CD8-positive, alpha-beta T cell (primary cell): ENCODE measurements at regions of chr13 and their contacts with region 1.

Region 1: DNA sequence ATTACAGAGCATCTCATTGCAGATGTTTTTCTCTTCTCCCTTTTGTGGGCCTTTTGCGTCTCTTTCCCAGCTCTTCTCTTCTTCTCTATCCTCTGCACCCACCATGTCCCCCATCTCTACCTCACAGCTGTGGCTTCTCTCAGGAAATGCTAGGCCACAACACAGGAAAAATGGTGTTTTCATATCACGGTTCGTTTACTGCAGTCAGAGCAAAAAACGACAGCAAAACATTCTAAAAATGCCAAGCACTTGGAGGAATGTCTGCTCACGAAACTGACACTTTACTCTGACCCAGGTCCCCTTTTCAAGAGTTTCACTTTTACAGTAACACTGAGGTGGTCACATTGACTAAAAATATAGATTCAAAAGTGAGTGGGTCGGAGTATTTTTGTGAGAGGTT is 152.2 kb downstream of the DCT start:
- DNase-seq: peak in 4 of 9 experiments; percentile 40 to 64 (median 54)
- ATAC-seq: peak; percentile 29
- H3K4me3 ChIP-seq: peak overlapping the region; percentile 1 to 3
- H3K4me3 Mint-ChIP-seq: peak overlapping the region; percentile 71
- H3K27ac ChIP-seq: peak overlapping the region in 1 of 2 experiments; percentile 63
- H3K27ac Mint-ChIP-seq: peak overlapping the region; percentile 82
- H3K4me1 ChIP-seq: peaks cover 77% of the 10 kb centered on the region
- H3K4me1 Mint-ChIP-seq: peaks cover 83% of the 10 kb centered on the region
- H3K27me3 ChIP-seq: no peaks in the 10 kb centered on the region
- H3K27me3 Mint-ChIP-seq: peaks cover 8% of the 10 kb centered on the region
- CTCF ChIP-seq: no peak

Region 2: GRCh38 chr13:94239135-94239534 is 88.2 kb before region 1 on chr13:
- CTCF ChIA-PET with region 1: interaction called, 5 read pairs
- POLR2A ChIA-PET with region 1: no interaction called
- intact Hi-C with region 1: loop called in 1 of 2 experiments (anchors 5 kb)
- DNase-seq: peak in 2 of 9 experiments; percentile 29 to 52
- ATAC-seq: peak; percentile 89
- H3K4me3 ChIP-seq: no peak overlapping the region
- H3K4me3 Mint-ChIP-seq: no peak overlapping the region
- H3K27ac ChIP-seq: no peak overlapping the region
- H3K27ac Mint-ChIP-seq: no peak overlapping the region
- H3K4me1 ChIP-seq: peaks cover 32% of the 10 kb centered on the region
- H3K4me1 Mint-ChIP-seq: peaks cover 40% of the 10 kb centered on the region
- H3K27me3 ChIP-seq: no peaks in the 10 kb centered on the region
- H3K27me3 Mint-ChIP-seq: no peaks in the 10 kb centered on the region
- CTCF ChIP-seq: no peak

Region 3: DNA sequence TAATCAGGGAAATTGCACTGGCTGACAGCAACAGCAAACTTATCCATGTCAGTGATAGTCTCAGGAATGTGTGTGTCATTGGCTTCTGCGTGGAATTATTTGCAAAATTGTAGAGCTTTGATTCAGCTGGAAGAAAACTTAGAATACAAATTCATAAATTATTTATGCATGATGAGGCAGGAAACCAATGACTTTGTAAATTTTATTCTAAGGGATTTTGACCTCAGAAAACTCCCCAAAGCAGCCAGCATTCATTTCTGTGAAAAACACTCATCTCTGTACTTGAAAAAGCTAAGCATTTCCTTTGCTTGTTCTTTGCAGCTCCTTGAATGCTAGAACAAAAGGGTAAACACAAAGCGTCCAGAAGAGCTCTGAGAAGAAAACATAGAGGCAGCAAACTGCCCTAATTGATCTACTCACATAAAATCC is 10.2 kb before region 1 on chr13:
- CTCF ChIA-PET with region 1: interaction called, 5 read pairs
- POLR2A ChIA-PET with region 1: interaction called, 6 read pairs
- intact Hi-C with region 1: loop called in 1 of 2 experiments (anchors 2 kb)
- DNase-seq: no peak
- ATAC-seq: no peak
- H3K4me3 ChIP-seq: no peak overlapping the region
- H3K4me3 Mint-ChIP-seq: no peak overlapping the region
- H3K27ac ChIP-seq: no peak overlapping the region
- H3K27ac Mint-ChIP-seq: no peak overlapping the region
- H3K4me1 ChIP-seq: no peaks in the 10 kb centered on the region
- H3K4me1 Mint-ChIP-seq: peaks cover 23% of the 10 kb centered on the region
- H3K27me3 ChIP-seq: no peaks in the 10 kb centered on the region
- H3K27me3 Mint-ChIP-seq: no peaks in the 10 kb centered on the region
- CTCF ChIP-seq: no peak

Region 4: GRCh38 chr13:94345374-94346195 is 18.3 kb after region 1 on chr13:
- CTCF ChIA-PET with region 1: interaction called, 8 read pairs
- POLR2A ChIA-PET with region 1: interaction called, 3 read pairs
- intact Hi-C with region 1: loop called in 1 of 2 experiments (anchors 2 kb)
- DNase-seq: peak in 2 of 9 experiments; percentile 55 to 68
- ATAC-seq: peak; percentile 56
- H3K4me3 ChIP-seq: no peak overlapping the region
- H3K4me3 Mint-ChIP-seq: no peak overlapping the region
- H3K27ac ChIP-seq: no peak overlapping the region
- H3K27ac Mint-ChIP-seq: no peak overlapping the region
- H3K4me1 ChIP-seq: no peaks in the 10 kb centered on the region
- H3K4me1 Mint-ChIP-seq: peaks cover 10% of the 10 kb centered on the region
- H3K27me3 ChIP-seq: no peaks in the 10 kb centered on the region
- H3K27me3 Mint-ChIP-seq: peaks cover 2% of the 10 kb centered on the region
- CTCF ChIP-seq: peak; percentile 34

Region 5: GRCh38 chr13:94595950-94596574 is 268.7 kb after region 1 on chr13 and contains the start of gene TGDS:
- CTCF ChIA-PET with region 1: no interaction called
- POLR2A ChIA-PET with region 1: no interaction called
- intact Hi-C with region 1: loop called (anchors 5 to 10 kb)
- DNase-seq: peak; percentile 74 to 96 (median 87)
- ATAC-seq: peak; percentile 97
- H3K4me3 ChIP-seq: peak within 1 kb of the TSS; percentile 94 to 97
- H3K4me3 Mint-ChIP-seq: peak within 1 kb of the TSS; percentile 88
- H3K27ac ChIP-seq: peak within 1 kb of the TSS; percentile 77 to 83
- H3K27ac Mint-ChIP-seq: peak within 1 kb of the TSS; percentile 94
- H3K4me1 ChIP-seq: peaks cover 24% of the 10 kb centered on the region
- H3K4me1 Mint-ChIP-seq: peaks cover 42% of the 10 kb centered on the region
- H3K27me3 ChIP-seq: no peaks in the 10 kb centered on the region
- H3K27me3 Mint-ChIP-seq: no peaks in the 10 kb centered on the region
- CTCF ChIP-seq: no peak
- total RNA-seq, gene TGDS: 4.5 to 4.6 TPM

Region 6: DNA sequence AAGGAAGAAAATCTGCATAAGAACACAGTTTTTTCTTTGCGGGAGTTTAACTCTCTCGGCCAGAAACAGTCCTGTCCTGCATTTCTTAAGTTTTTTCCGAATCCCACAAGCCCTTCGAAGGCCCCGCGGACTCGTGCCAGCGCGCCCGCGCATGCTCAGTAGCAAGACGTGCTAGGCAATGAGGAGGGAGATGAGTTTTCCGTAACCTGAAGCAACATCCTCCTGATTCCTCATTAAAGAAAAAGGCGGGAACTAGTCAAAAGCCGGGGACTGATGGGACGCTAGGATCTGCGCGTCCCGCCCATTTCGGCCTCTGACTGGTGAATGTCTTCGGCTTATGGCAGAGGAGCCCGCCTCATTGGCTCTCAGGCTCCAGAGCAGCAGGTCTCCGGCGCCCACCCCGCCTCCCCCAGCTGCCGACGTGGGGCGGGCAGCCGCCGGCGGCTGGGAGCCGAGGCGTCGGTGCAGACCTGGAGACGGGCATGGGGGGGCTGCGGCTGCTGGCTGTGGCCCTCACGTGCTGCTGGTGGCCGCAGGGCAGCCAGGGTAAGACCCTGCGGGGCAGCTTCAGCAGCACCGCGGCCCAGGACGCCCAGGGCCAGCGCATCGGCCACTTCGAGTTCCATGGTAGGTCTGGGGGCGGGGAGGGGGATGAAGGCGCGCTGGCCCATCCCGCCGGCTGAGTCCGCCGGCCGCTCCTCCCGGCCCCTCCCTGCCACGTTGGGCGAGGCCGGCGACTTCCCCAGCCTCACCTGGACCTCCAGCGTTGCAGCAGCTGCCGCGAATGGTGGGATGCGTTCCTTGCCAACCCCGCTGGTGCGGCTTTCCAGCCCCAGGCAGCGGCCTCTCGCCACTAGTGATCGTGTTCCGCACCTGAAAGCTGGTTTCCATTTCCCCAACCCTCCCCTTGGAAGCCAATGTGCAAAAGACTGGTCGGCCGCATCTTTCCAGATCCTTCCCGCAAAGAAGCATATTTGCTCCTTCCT is 274.4 kb after region 1 on chr13 and contains the start of gene GPR180:
- CTCF ChIA-PET with region 1: no interaction called
- POLR2A ChIA-PET with region 1: no interaction called
- intact Hi-C with region 1: loop called (anchors 5 to 10 kb)
- DNase-seq: peak; percentile 66 to 97 (median 87)
- ATAC-seq: peak; percentile 98
- H3K4me3 ChIP-seq: peak within 1 kb of the TSS; percentile 62 to 76
- H3K4me3 Mint-ChIP-seq: peak within 1 kb of the TSS; percentile 84
- H3K27ac ChIP-seq: peak within 1 kb of the TSS; percentile 43 to 51
- H3K27ac Mint-ChIP-seq: peak within 1 kb of the TSS; percentile 86
- H3K4me1 ChIP-seq: peaks cover 3% of the 10 kb centered on the region
- H3K4me1 Mint-ChIP-seq: peaks cover 42% of the 10 kb centered on the region
- H3K27me3 ChIP-seq: no peaks in the 10 kb centered on the region
- H3K27me3 Mint-ChIP-seq: no peaks in the 10 kb centered on the region
- CTCF ChIP-seq: no peak
- total RNA-seq, gene GPR180: 0.64 to 0.71 TPM

Region 7: DNA sequence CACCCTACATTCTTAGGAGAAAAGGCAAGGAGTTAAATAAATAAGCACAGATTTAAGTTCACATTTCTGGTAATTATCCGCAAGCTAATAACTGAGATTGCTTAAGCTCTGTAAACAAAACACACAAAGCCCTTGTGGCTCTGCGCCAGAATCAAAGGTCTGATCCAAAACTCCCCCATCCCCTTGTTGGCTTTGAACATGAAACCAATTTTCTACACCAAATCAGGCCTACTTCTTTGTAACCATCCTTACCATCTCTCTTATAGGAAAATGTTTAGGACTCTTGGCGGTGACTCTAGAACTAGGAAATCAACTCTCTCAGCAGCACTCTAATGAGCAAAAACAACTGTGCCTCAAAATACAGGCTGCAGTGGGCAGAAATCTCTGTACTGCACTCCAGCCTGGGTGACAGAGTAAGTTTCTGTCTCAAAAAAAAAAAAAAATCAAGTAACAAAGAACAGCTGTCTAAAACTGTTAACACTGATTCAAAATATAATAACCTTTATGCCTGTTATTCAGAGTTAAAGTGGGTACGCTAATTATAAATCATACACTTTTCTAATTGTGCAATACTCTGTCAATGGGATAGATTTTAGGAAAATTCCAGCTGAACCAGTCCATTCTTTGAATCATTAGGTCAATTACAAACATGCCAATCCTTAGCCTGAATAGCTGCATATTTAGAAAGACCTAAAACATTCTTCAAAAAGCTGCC is 948.2 kb after region 1 on chr13:
- CTCF ChIA-PET with region 1: no interaction called
- POLR2A ChIA-PET with region 1: no interaction called
- intact Hi-C with region 1: no loop called
- DNase-seq: no peak
- ATAC-seq: no peak
- H3K4me3 ChIP-seq: no peak overlapping the region
- H3K4me3 Mint-ChIP-seq: no peak overlapping the region
- H3K27ac ChIP-seq: no peak overlapping the region
- H3K27ac Mint-ChIP-seq: peak overlapping the region; percentile 27
- H3K4me1 ChIP-seq: no peaks in the 10 kb centered on the region
- H3K4me1 Mint-ChIP-seq: peaks cover 4% of the 10 kb centered on the region
- H3K27me3 ChIP-seq: no peaks in the 10 kb centered on the region
- H3K27me3 Mint-ChIP-seq: no peaks in the 10 kb centered on the region
- CTCF ChIP-seq: no peak